MCF 10A (cell line): ENCODE measurements at regions of chr7 and their contacts with region 1.

Region 1: GRCh38 chr7:51162724-51163329 is 153.8 kb downstream of the COBL start:
- DNase-seq: peak; percentile 89
- H3K4me3 Mint-ChIP-seq: no peak overlapping the region
- H3K27ac Mint-ChIP-seq: no peak overlapping the region
- H3K4me1 Mint-ChIP-seq: peaks cover 5% of the 10 kb centered on the region
- H3K27me3 Mint-ChIP-seq: no peaks in the 10 kb centered on the region
- CTCF ChIP-seq: peak; percentile 55

Region 2: GRCh38 chr7:50467817-50468610 is 694.8 kb before region 1 on chr7:
- CTCF ChIA-PET with region 1: interaction called, 88 read pairs
- POLR2A ChIA-PET with region 1: no interaction called
- intact Hi-C with region 1: loop called (anchors 1 kb)
- DNase-seq: peak; percentile 80
- H3K4me3 Mint-ChIP-seq: no peak overlapping the region
- H3K27ac Mint-ChIP-seq: no peak overlapping the region
- H3K4me1 Mint-ChIP-seq: peaks cover 7% of the 10 kb centered on the region
- H3K27me3 Mint-ChIP-seq: no peaks in the 10 kb centered on the region
- CTCF ChIP-seq: peak; percentile 91

Region 3: DNA sequence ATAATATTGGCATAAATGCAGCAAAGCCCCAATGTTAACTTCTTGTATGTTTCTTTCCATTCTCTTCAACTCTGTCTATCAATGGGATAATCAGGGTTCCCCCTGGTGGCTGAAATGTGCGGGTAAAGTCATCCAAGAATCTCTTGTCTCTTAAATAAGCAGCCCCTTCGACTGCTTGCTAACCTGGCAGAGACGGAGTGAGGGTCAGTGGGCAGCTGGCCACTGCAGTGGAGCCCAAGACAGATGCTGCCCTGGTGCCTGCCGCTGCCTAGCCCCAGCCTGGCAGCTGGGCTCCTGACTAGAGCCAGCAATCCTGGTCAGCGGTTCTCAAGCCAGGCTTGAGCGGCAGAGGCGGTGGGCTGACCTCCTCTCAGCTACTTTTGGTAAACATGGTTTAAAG is 95.1 kb before region 1 on chr7:
- CTCF ChIA-PET with region 1: interaction called, 19 read pairs
- POLR2A ChIA-PET with region 1: no interaction called
- intact Hi-C with region 1: no loop called
- DNase-seq: peak; percentile 75
- H3K4me3 Mint-ChIP-seq: no peak overlapping the region
- H3K27ac Mint-ChIP-seq: no peak overlapping the region
- H3K4me1 Mint-ChIP-seq: peaks cover 11% of the 10 kb centered on the region
- H3K27me3 Mint-ChIP-seq: no peaks in the 10 kb centered on the region
- CTCF ChIP-seq: peak; percentile 52

Region 4: DNA sequence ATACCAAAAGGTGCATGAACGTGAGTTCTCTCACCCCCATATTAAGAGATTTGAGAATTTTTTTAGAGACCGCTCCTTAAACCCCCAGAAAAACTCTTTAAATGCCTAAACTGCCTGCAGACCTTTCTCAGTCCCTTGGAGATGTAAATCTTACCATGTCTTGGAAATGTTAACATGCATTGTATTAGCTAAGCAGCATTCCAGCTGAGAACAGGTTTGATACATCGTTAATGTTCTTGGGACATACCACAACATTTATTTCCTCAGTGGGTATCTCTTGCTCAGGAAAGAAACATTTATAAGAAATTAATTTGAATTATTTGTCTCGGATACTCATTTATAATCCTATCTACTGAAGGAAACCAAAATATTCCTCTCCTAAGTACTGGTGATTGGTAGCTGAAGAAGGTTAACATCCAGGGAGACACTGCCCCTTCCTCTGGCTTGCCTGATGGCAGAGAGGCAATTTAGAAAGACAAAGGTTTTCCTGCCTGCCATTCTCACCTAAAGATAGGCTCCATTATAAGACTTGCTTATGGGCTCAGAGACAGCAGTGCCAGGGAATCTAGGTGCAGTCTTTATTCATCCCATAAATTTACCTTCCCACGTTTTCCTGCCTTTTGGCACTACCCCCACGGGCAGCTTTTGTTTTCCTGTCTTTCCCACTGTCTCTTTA is 12.6 kb after region 1 on chr7:
- CTCF ChIA-PET with region 1: interaction called, 46 read pairs
- POLR2A ChIA-PET with region 1: no interaction called
- intact Hi-C with region 1: no loop called
- DNase-seq: no peak
- H3K4me3 Mint-ChIP-seq: no peak overlapping the region
- H3K27ac Mint-ChIP-seq: no peak overlapping the region
- H3K4me1 Mint-ChIP-seq: no peaks in the 10 kb centered on the region
- H3K27me3 Mint-ChIP-seq: no peaks in the 10 kb centered on the region
- CTCF ChIP-seq: no peak

Region 5: DNA sequence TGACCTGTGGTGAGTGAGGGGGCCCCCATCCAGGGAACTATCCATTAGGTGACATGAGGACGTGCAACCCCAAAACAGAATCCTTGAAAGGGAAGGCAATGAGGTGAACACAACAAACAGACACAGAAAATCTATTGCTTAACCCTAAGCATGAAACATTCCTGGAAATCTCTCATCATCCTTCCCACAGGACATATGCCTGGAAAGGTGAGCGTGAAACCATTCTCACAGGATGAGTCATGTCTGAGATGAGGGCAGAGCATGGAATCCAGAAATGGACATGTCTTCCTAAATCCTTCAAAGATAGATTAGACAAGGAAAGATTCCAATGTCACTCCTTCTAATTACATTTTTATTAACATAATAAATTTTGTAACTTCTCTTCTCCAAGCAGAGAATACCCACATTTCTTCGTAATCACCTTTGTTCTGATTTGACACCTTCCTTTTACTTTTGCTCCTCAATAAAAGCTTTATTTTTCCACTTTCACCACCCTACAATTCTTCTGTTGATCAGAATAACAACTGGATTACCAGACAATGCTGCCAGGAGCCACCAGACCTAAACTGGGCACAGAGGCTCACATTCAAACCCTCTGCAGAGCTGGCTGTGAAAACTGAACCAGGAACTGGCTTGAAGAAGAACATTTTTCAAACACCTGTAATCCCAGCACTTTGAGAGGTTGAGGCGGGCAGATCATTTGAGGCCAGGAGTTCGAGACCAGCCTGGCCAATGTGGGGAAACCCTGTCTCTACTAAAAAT is 86.5 kb after region 1 on chr7:
- CTCF ChIA-PET with region 1: interaction called, 12 read pairs
- POLR2A ChIA-PET with region 1: no interaction called
- intact Hi-C with region 1: no loop called
- DNase-seq: peak; percentile 90
- H3K4me3 Mint-ChIP-seq: no peak overlapping the region
- H3K27ac Mint-ChIP-seq: no peak overlapping the region
- H3K4me1 Mint-ChIP-seq: peaks cover 22% of the 10 kb centered on the region
- H3K27me3 Mint-ChIP-seq: no peaks in the 10 kb centered on the region
- CTCF ChIP-seq: no peak

Region 6: GRCh38 chr7:51357821-51358220 is 195.0 kb after region 1 on chr7:
- CTCF ChIA-PET with region 1: interaction called, 400 read pairs
- POLR2A ChIA-PET with region 1: interaction called, 6 read pairs
- intact Hi-C with region 1: loop called (anchors 1 kb)
- DNase-seq: no peak
- H3K4me3 Mint-ChIP-seq: no peak overlapping the region
- H3K27ac Mint-ChIP-seq: no peak overlapping the region
- H3K4me1 Mint-ChIP-seq: no peaks in the 10 kb centered on the region
- H3K27me3 Mint-ChIP-seq: peaks cover 10% of the 10 kb centered on the region
- CTCF ChIP-seq: peak; percentile 25